ENCODE measurements at regions of chr11 and their contacts with region 1.

Region 1: DNA sequence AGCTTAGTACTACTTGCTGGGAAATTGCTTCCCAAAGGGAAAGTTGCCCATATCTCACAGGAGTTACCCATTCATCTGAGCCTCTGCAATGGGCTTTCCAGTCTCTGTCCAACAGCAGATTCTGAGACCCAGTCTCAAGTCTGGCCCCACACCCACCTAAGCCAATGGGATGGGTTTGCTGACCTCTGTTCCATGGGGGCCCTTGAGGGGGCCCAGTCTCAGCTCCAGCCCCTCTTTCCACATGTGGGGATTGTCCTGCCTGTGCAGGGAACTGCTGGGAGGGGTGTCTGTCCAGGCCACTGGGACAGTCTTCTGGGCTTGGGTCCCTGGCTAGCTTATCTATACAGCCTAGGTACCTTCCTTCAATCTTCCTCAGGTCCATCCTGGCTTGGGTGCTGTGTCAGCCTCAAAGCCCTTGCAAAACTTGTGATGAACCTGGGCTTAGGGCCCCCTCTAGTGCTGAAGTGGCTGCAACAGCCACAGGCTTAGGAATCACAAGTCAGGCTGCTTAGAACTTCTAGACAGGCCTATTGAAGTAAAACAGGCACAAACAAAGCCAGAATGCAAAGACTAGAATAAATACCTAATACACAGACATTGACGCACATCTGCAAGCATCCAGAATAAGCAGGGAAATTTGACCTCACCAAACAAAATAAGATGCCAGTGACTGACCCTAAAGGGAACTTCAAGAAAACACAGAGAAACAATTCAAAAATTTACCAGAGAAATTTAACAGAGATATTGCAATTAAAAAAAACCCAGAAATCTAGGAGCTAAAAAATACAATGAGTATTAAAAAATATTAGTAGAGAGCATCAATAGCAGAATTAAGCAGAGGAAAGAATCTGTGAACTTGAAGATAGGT is 11.7 kb upstream of the PATL1 start:
- DNase-seq: peak in 8 of 9 donors; percentile 43 to 66 (median 58)
- ATAC-seq: peak; percentile 97
- H3K4me3 ChIP-seq: no peak overlapping the region
- H3K4me3 Mint-ChIP-seq: no peak overlapping the region
- H3K27ac ChIP-seq: no peak overlapping the region
- H3K27ac Mint-ChIP-seq: no peak overlapping the region
- H3K4me1 ChIP-seq: no peaks in the 10 kb centered on the region
- H3K4me1 Mint-ChIP-seq: no peaks in the 10 kb centered on the region
- H3K27me3 ChIP-seq: no peaks in the 10 kb centered on the region
- H3K27me3 Mint-ChIP-seq: peaks cover 18 to 39% (median 23%) of the 10 kb centered on the region in 5 donors

Region 2: DNA sequence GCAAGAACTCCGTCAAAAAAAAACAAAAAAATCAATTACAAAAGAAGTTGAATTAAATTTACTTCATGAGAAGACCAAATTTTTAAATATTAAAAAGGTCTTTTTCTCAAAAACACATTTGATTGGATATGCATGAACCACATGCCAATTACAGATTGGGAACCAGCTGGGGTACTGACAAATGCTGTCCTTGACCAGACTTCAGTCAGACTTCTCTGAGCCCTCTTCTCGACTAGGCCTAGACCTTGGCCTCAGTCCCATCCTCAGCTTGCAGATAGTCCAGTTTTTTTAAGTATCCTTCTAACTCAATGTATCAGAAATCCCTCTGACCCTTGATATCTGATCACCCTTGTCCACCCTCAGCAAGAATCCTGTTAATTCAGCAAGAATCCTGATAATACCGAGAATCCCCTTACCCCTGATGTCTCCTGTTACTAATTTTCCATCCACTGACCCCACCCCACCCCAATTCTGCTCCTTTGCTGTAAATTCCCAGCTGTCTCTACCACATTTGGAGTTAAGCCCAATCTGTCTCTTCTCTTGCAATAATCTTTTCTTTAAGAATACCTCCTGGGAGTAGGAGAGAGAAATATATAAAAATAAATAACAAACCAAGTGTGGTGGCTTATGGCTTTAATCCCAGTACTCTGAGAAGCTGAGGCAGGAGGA is 138.2 kb before region 1 on chr11:
- CTCF ChIA-PET with region 1: interaction called, 10 read pairs
- POLR2A ChIA-PET with region 1: no interaction called
- intact Hi-C with region 1: loop called (anchors 1 kb)
- DNase-seq: no peak
- ATAC-seq: no peak
- H3K4me3 ChIP-seq: no peak overlapping the region
- H3K4me3 Mint-ChIP-seq: no peak overlapping the region
- H3K27ac ChIP-seq: no peak overlapping the region
- H3K27ac Mint-ChIP-seq: no peak overlapping the region
- H3K4me1 ChIP-seq: no peaks in the 10 kb centered on the region
- H3K4me1 Mint-ChIP-seq: peaks cover 7 to 9% (median 8%) of the 10 kb centered on the region in 7 donors
- H3K27me3 ChIP-seq: no peaks in the 10 kb centered on the region
- H3K27me3 Mint-ChIP-seq: peaks cover 0 to 6% (median 0%) of the 10 kb centered on the region in 5 donors

Region 3: DNA sequence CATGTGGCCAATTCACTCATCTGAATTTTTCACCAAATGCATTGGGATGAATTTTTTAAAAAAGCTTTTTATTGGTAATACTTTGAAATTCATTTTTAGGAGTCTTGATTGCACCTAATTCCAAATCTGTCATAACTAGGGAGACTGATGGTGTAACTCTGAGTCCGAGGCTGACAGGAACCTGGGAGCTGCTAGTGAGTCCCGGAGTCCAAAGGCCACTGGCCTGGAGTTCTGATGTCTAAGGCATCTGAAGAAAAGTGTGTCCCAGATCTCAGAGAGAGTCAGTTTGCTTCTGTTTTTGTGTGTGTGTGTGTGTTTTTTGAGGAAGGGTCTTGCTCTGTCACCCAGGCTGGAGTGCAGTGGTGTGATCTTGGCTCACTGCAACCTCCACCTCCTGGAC is 50.6 kb after region 1 on chr11:
- CTCF ChIA-PET with region 1: no interaction called
- POLR2A ChIA-PET with region 1: no interaction called
- intact Hi-C with region 1: no loop called
- DNase-seq: no peak
- ATAC-seq: no peak
- H3K4me3 ChIP-seq: no peak overlapping the region
- H3K4me3 Mint-ChIP-seq: no peak overlapping the region
- H3K27ac ChIP-seq: no peak overlapping the region
- H3K27ac Mint-ChIP-seq: no peak overlapping the region
- H3K4me1 ChIP-seq: no peaks in the 10 kb centered on the region
- H3K4me1 Mint-ChIP-seq: peaks cover 0 to 12% (median 0%) of the 10 kb centered on the region in 7 donors
- H3K27me3 ChIP-seq: no peaks in the 10 kb centered on the region
- H3K27me3 Mint-ChIP-seq: peaks cover 0 to 12% (median 0%) of the 10 kb centered on the region in 5 donors

Region 4: GRCh38 chr11:59818572-59818971 is 138.1 kb after region 1 on chr11:
- CTCF ChIA-PET with region 1: no interaction called
- POLR2A ChIA-PET with region 1: no interaction called
- intact Hi-C with region 1: no loop called
- DNase-seq: no peak
- ATAC-seq: no peak
- H3K4me3 ChIP-seq: no peak overlapping the region
- H3K4me3 Mint-ChIP-seq: no peak overlapping the region
- H3K27ac ChIP-seq: no peak overlapping the region
- H3K27ac Mint-ChIP-seq: peak overlapping the region in 3 of 9 donors; percentile 10 to 37 (median 18)
- H3K4me1 ChIP-seq: peaks cover 0 to 4% of the 10 kb centered on the region in 2 donors
- H3K4me1 Mint-ChIP-seq: peaks cover 9 to 21% (median 15%) of the 10 kb centered on the region in 7 donors
- H3K27me3 ChIP-seq: no peaks in the 10 kb centered on the region
- H3K27me3 Mint-ChIP-seq: peaks cover 0 to 7% (median 0%) of the 10 kb centered on the region in 5 donors